Activated CD4-positive, alpha-beta T cell treated with anti-CD3 and anti-CD28 coated beads, Interleukin-2, amount 10 ng/mL, durations not matched to agents 24 days and 14 days (primary cell): ENCODE measurements at regions of chr4 and their contacts with region 1.

Region 1: GRCh38 chr4:674172-675035 is at the starts of genes ATP5ME and MYL5:
- DNase-seq: peak; percentile 99
- H3K4me3 Mint-ChIP-seq: peak within 1 kb of the TSS; percentile 88
- H3K27ac Mint-ChIP-seq: peak within 1 kb of the TSS; percentile 91
- H3K4me1 Mint-ChIP-seq: peaks cover 8% of the 10 kb centered on the region
- H3K27me3 Mint-ChIP-seq: no peaks in the 10 kb centered on the region
- total RNA-seq, gene ATP5ME: 232 TPM in 2 replicates
- total RNA-seq, gene MYL5: 23.4 and 24.7 TPM in 2 replicates

Region 2: GRCh38 chr4:242121-242848 is 432.1 kb before region 1 on chr4:
- intact Hi-C with region 1: loop called (anchors 1 kb)
- DNase-seq: peak; percentile 91
- H3K4me3 Mint-ChIP-seq: peak overlapping the region; percentile 82
- H3K27ac Mint-ChIP-seq: peak overlapping the region; percentile 63
- H3K4me1 Mint-ChIP-seq: peaks cover 8% of the 10 kb centered on the region
- H3K27me3 Mint-ChIP-seq: no peaks in the 10 kb centered on the region

Region 3: GRCh38 chr4:473570-474457 is 200.6 kb before region 1 on chr4:
- intact Hi-C with region 1: loop called (anchors 10 kb)
- DNase-seq: peak; percentile 98
- H3K4me3 Mint-ChIP-seq: peak overlapping the region; percentile 99
- H3K27ac Mint-ChIP-seq: peak overlapping the region; percentile 100
- H3K4me1 Mint-ChIP-seq: peaks cover 22% of the 10 kb centered on the region
- H3K27me3 Mint-ChIP-seq: no peaks in the 10 kb centered on the region

Region 4: DNA sequence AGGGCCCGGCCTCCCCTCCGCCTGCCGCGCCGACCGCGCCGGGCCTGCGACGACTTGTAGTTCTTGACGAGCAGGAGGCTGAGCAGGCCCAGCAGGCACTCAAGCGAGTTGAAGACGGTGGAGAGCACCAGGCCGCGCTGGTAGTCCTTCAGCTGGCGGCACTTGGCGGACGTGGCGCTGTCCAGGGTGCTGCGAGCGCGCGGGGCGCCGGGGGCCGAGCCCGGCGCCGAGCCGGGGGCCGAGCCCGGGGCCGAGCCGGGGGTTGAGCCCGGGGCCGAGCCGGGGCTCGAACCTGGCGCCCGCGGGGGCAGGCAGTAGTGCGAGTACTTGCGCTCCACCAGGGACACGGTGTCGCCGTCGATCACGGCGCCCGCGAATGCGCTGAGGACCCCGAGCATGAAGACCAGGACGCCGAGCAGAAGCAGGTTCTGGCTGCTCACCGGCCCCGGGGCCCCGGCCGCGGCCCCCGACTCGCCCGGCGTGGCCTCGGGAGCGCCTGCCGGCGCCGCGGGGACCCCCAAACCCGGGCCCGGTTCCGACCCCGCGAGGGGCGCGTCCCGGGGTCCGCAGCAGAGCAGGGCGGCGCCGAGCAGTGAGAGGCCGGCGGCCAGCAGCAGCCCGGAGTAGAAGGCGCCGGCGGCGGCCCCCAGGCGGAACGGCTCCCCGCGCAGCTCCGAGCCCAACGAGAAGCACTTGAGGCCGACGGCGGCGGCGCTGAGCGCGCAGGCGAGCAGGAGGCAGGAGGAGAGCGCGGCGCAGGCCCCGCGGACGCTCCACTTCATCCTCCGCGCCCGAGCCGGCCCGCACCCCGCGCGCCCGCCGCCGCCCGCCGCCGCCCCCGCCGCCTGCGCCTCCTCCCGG is 98.9 kb before region 1 on chr4:
- intact Hi-C with region 1: no loop called
- DNase-seq: no peak
- H3K4me3 Mint-ChIP-seq: no peak overlapping the region
- H3K27ac Mint-ChIP-seq: no peak overlapping the region
- H3K4me1 Mint-ChIP-seq: peaks cover 4% of the 10 kb centered on the region
- H3K27me3 Mint-ChIP-seq: peaks cover 44% of the 10 kb centered on the region

Region 5: GRCh38 chr4:602559-602942 is 71.9 kb before region 1 on chr4:
- intact Hi-C with region 1: loop called (anchors 1 kb)
- DNase-seq: peak; percentile 87
- H3K4me3 Mint-ChIP-seq: no peak overlapping the region
- H3K27ac Mint-ChIP-seq: no peak overlapping the region
- H3K4me1 Mint-ChIP-seq: peaks cover 4% of the 10 kb centered on the region
- H3K27me3 Mint-ChIP-seq: peaks cover 4% of the 10 kb centered on the region

Region 6: DNA sequence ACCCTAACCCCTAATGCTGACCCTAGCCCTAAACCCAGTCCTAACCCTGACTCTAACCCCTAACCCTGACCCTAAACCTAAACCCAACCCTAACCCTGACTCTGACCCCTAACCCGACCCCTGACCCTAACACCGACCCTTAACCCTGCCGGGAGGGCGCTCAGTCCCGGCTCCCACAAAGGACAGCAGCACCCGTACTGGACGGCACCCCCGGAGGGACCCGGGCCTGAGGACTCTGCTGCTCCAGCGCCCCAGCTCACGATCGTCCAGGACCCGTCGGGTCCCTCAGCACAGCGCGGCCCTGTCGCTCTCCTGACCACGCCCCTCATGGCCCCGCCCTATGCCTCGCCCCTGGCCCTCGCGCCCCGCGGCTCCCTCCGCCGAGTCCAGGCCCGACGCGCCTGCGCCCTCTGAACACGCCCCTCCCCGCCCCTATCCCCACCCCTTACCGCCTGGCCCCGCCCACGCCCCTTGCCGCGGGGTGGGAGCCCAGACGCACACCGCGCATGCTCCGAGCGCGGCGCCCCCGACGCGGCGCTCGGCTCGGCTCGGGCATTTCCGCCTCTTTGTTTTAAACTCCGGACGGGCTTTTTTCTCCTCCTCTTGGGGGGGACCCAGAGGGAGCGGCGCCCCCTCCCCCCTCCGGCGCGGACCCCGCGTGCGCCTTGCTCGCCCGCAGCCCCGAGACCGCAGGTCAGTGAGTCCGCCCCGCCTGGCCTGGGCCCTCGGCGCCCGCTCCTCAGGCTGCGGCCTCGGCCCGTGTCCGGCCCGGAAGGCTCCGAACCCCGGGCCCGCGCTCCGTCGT is 31.1 kb after region 1 on chr4 and contains the start of gene PCGF3:
- intact Hi-C with region 1: loop called (anchors 2 kb)
- DNase-seq: peak; percentile 99
- H3K4me3 Mint-ChIP-seq: peak within 1 kb of the TSS; percentile 91
- H3K27ac Mint-ChIP-seq: peak within 1 kb of the TSS; percentile 86
- H3K4me1 Mint-ChIP-seq: peaks cover 17% of the 10 kb centered on the region
- H3K27me3 Mint-ChIP-seq: no peaks in the 10 kb centered on the region
- total RNA-seq, gene PCGF3: 32.1 and 34.5 TPM in 2 replicates

Region 7: GRCh38 chr4:721261-722168 is 47.1 kb after region 1 on chr4:
- intact Hi-C with region 1: no loop called
- DNase-seq: no peak
- H3K4me3 Mint-ChIP-seq: no peak overlapping the region
- H3K27ac Mint-ChIP-seq: no peak overlapping the region
- H3K4me1 Mint-ChIP-seq: peaks cover 5% of the 10 kb centered on the region
- H3K27me3 Mint-ChIP-seq: no peaks in the 10 kb centered on the region

Region 8: GRCh38 chr4:931960-932712 is 257.7 kb after region 1 on chr4 and contains the starts of genes GAK and TMEM175:
- intact Hi-C with region 1: loop called (anchors 2 kb)
- DNase-seq: peak; percentile 100
- H3K4me3 Mint-ChIP-seq: peak within 1 kb of the TSS; percentile 99
- H3K27ac Mint-ChIP-seq: peak within 1 kb of the TSS; percentile 95
- H3K4me1 Mint-ChIP-seq: peaks cover 40% of the 10 kb centered on the region
- H3K27me3 Mint-ChIP-seq: no peaks in the 10 kb centered on the region
- total RNA-seq, gene GAK: 131 and 147 TPM in 2 replicates
- total RNA-seq, gene TMEM175: 12.7 and 13.9 TPM in 2 replicates